BJ (cell line): ENCODE measurements at regions of chr2 and their contacts with region 1.

Region 1: GRCh38 chr2:88739985-88740600 is 48.6 kb downstream of the RPIA start:
- DNase-seq: peak; percentile 1
- H3K4me3 ChIP-seq: no peak overlapping the region
- H3K27me3 ChIP-seq: no peaks in the 10 kb centered on the region
- CTCF ChIP-seq: peak; percentile 94

Region 2: DNA sequence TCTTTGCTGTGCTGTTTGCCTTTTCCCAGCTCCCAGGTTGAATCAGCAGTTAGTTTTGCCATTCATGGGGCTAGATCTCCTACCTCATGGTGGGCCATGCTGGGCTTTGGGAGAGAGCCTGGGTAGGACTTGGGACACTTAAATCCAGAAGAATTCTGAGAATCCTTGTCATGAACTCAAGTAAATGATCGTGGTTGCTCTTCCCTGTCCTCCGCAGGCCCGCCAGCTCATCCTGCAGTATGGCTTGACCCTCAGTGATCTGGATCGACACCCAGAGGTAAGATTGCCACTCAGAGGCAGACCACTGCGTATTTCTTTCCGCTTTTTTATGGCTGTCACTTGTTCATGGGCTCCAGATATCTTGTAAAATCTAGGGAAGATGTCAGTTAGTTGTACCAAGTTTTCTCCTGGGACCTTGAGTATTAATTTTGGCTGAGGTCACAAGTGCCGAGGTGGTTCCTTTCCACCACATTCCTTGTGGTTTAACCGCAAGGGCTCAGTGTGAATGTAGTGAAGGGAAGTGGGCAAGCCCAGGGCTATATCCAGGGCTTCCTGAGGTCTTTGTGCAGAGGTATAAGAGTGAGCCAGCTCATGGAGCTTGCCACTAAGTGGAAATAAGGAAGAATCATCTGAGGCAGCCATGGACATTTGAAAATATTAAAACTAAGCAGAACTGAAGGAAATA is 10.9 kb before region 1 on chr2:
- CTCF ChIA-PET with region 1: interaction called, 28 read pairs
- POLR2A ChIA-PET with region 1: no interaction called
- DNase-seq: peak; percentile 6
- H3K4me3 ChIP-seq: no peak overlapping the region
- H3K27me3 ChIP-seq: no peaks in the 10 kb centered on the region
- CTCF ChIP-seq: no peak

Region 3: DNA sequence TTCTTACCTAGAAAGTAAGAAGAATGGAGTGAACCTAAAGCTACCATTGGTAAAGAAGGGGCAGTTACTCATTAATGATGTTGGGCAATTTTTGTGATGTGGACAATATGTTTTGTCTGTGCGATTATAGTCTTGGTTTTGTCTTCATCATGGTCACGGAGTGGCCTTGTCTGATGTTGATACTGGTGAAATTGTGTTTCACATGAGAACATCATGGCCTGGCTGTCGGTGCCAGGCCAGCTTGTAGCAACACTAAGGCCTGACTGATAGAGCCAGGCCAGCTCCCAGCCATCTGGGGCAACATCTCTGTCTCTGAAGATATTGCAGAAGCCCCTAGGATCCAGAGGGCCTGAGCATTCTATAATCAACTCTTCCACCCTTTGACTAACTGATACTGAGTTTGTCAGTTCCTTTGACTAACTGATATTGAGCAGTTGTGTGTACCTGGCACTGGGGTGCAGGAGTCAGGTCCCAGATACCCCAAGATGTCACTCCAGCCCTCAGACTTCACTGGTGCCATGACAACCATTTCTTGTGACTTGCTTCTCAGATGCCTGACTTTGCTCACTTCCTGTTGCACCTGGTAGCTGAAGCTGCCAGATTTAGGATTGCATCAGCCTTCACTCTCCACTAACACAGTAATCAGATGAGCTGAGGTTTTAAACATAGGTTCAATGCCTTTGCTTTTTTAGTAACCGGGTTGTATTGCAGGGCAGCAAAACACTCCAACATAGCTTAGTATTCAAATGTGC is 13.9 kb after region 1 on chr2:
- CTCF ChIA-PET with region 1: interaction called, 29 read pairs
- POLR2A ChIA-PET with region 1: no interaction called
- DNase-seq: no peak
- H3K4me3 ChIP-seq: no peak overlapping the region
- H3K27me3 ChIP-seq: no peaks in the 10 kb centered on the region
- CTCF ChIP-seq: no peak